ENCODE measurements at regions of chr7 and their contacts with region 1.

Region 1: GRCh38 chr7:78510580-78511188 is 712.1 kb downstream of the PHTF2 start:
- DNase-seq: no peak
- ATAC-seq: no peak

Region 2: GRCh38 chr7:78472519-78472918 is 38.2 kb before region 1 on chr7:
- intact Hi-C with region 1: no loop called
- DNase-seq: no peak
- ATAC-seq: no peak

Region 3: GRCh38 chr7:79176859-79177477 is 666.3 kb after region 1 on chr7:
- intact Hi-C with region 1: loop called (anchors 5 kb)
- DNase-seq: no peak
- ATAC-seq: peak; percentile 54

Measured in Right ventricle myocardium inferior (tissue), 1 donor.